Activated CD8-positive, alpha-beta T cell treated with anti-CD3 and anti-CD28 coated beads, Interleukin-2, amount 10 ng/mL, durations not matched to agents 7 days and 5 days (primary cell): ENCODE measurements at regions of chr10 and their contacts with region 1.

Region 1: DNA sequence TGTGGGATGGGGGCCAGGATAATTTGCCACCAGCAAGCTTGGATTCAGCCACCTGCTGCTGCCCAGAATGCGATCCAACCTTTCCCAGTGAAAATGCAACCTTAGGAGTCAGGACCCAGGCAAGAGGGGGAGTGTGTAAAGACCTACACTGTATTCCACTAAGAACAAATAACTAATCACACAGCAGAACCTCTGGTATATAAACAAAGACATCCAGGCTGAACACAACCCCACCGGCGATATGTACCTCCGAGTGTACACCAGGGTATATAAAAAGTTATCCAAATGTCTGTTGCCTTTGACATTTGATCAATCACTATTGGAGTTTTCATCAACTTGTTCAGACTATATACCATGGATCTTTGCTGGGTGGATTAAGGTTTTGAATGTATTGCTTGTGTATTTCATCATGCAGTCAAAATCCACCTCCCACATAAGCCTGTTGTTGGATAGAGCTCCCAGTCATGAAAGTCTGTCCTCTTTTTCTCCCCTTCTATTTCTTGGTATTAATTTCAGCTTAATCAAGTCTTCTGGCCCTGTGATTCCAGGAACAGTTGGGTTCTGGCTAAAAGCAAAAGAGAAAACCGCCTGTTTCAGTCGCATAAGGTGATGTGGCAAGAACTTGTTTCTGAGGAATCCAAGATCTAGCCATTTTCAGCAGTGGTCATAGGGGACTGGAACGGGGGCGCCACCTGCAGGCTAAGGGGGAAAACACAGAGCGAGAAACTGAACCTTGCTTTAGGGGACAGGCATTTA is 290.7 kb downstream of the CCDC3 start:
- DNase-seq: peak; percentile 83
- ATAC-seq: peak; percentile 90
- H3K4me3 Mint-ChIP-seq: no peak overlapping the region
- H3K27ac Mint-ChIP-seq: peak overlapping the region; percentile 51
- H3K4me1 Mint-ChIP-seq: peaks cover 32% of the 10 kb centered on the region
- H3K27me3 Mint-ChIP-seq: no peaks in the 10 kb centered on the region

Region 2: GRCh38 chr10:12214763-12215218 is 496.0 kb before region 1 on chr10:
- CTCF ChIA-PET with region 1: interaction called, 33 read pairs
- POLR2A ChIA-PET with region 1: no interaction called
- DNase-seq: peak; percentile 65
- ATAC-seq: peak; percentile 42
- H3K4me3 Mint-ChIP-seq: peak overlapping the region; percentile 34
- H3K27ac Mint-ChIP-seq: peak overlapping the region; percentile 85
- H3K4me1 Mint-ChIP-seq: peaks cover 14% of the 10 kb centered on the region
- H3K27me3 Mint-ChIP-seq: no peaks in the 10 kb centered on the region

Region 3: DNA sequence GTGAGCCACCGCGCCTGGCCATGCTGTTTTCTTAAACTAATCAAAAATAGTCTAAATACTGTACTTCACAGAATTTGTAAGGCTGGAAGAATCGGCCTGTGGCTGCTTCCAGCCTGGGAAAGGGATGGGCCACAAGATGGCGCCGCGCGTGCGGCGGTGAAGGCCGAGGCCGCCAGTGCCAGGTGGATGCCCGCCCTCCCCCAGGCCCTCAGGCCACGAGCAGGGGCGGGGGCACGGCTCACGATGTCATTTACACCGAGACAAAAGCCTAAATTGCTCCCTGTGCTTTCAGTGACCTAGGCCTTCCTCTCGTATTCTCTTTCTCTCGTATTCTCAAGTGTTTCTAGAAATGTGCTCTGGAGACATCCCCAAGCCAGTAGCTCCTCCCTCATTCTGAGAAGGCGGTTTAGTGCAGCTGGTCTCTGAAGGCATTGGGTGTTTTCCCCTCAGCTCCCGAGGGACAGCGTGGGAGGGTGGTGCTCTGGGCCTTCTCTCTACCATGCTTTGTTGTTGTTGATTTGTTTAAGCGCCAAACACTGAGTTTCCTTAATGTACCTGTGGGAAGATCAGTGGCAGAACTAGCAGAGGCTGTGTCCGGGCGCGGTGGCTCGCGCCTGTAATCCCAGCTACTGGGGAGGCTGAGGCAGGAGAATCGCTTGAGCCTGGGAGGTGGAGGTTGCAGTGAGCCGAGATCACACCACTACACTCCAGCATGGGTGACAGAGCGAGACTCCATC is 446.4 kb before region 1 on chr10:
- CTCF ChIA-PET with region 1: interaction called, 51 read pairs
- POLR2A ChIA-PET with region 1: no interaction called
- DNase-seq: peak; percentile 69
- ATAC-seq: peak; percentile 80
- H3K4me3 Mint-ChIP-seq: peak overlapping the region; percentile 33
- H3K27ac Mint-ChIP-seq: no peak overlapping the region
- H3K4me1 Mint-ChIP-seq: peaks cover 18% of the 10 kb centered on the region
- H3K27me3 Mint-ChIP-seq: no peaks in the 10 kb centered on the region

Region 4: GRCh38 chr10:12699258-12699700 is 11.5 kb before region 1 on chr10:
- CTCF ChIA-PET with region 1: interaction called, 15 read pairs
- POLR2A ChIA-PET with region 1: no interaction called
- DNase-seq: no peak
- ATAC-seq: no peak
- H3K4me3 Mint-ChIP-seq: no peak overlapping the region
- H3K27ac Mint-ChIP-seq: no peak overlapping the region
- H3K4me1 Mint-ChIP-seq: peaks cover 4% of the 10 kb centered on the region
- H3K27me3 Mint-ChIP-seq: no peaks in the 10 kb centered on the region

Region 5: DNA sequence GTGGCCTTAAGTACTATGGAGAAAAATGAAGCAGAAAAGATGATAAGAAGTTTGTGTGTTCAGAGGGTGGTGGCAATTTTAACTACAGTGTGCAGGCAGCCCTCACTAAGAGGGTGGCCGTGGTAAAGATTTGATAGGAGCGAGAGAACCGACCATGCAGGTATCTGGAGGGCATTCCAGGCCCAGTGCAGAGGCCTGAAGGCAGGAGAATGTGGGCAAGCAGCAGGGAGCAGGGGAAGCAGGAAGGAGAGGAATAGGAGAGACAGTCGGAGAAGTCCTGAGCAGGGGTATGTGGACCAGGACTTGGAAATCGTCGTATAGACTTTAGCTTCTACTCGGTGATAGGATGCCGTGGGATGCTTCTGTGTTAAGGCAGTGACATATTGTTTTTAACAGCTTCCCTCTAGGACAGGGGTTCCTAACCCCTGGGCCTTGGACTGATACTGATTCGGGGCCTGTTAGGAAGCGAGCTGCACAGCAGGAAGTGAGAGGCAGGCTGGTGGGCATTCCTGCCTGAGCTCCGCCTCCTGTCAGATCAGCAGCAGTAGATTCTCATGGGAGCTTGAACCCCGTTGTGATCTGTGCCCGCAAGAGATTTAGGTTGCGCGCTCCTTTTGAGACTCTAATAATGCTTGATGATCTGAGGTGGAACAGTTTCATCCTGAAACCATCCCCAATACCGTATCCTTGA is 63.6 kb after region 1 on chr10:
- CTCF ChIA-PET with region 1: no interaction called
- POLR2A ChIA-PET with region 1: no interaction called
- DNase-seq: no peak
- ATAC-seq: no peak
- H3K4me3 Mint-ChIP-seq: no peak overlapping the region
- H3K27ac Mint-ChIP-seq: no peak overlapping the region
- H3K4me1 Mint-ChIP-seq: no peaks in the 10 kb centered on the region
- H3K27me3 Mint-ChIP-seq: no peaks in the 10 kb centered on the region

Region 6: DNA sequence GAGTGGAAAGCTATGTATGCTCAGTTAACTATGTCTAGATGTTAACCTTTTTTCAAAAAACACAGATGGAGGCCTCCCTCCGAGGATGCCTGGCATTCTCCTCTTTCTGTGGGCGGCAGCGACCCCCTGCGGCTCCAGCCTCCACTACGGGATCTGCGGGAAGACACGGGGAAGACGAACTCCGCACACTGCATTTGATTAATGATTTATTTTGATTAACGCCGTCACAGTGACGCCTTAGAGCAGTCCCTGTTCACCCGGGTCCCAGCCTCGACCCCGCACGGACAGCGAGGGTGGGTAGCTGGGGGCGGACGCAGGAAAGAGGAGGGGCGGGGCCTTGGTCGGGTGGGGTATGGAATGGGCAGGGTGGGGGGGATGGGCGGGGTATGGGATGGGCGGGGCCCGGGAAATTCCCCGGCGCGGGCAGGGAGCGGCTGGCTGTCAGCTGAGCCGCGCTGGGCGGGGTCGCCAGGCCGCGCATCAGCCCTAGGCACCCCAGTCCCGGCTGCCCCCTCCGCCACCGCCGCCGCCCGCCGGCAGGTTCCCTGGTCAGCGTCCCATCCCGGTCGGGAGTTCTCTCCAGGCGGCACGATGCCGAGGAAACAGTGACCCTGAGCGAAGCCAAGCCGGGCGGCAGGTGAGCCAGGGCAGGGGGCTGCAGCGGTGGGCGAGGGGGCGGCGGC is 389.0 kb after region 1 on chr10 and contains the start of gene OPTN:
- CTCF ChIA-PET with region 1: interaction called, 12 read pairs
- POLR2A ChIA-PET with region 1: no interaction called
- DNase-seq: peak; percentile 79
- ATAC-seq: peak; percentile 80
- H3K4me3 Mint-ChIP-seq: peak within 1 kb of the TSS; percentile 86
- H3K27ac Mint-ChIP-seq: peak within 1 kb of the TSS; percentile 91
- H3K4me1 Mint-ChIP-seq: peaks cover 41% of the 10 kb centered on the region
- H3K27me3 Mint-ChIP-seq: no peaks in the 10 kb centered on the region
- total RNA-seq, gene OPTN: 72.4 to 73.8 TPM